Tibial artery (tissue), 4 donors: ENCODE measurements at regions of chr4 and their contacts with region 1.

Region 1: GRCh38 chr4:102826890-102827673 is at the start of gene UBE2D3:
- DNase-seq: peak; percentile 92 to 96
- H3K4me3 ChIP-seq: peak within 1 kb of the TSS; percentile 75 to 76
- H3K27ac ChIP-seq: peak within 1 kb of the TSS; percentile 99 to 100
- H3K4me1 ChIP-seq: peaks cover 0 to 31% (median 13%) of the 10 kb centered on the region in 4 donors
- H3K27me3 ChIP-seq: no peaks in the 10 kb centered on the region
- CTCF ChIP-seq: no peak

Region 2: GRCh38 chr4:102760645-102761295 is 66.3 kb before region 1 on chr4 and contains the start of gene MANBA:
- intact Hi-C with region 1: loop called (anchors 10 kb)
- DNase-seq: peak; percentile 80 to 92
- H3K4me3 ChIP-seq: peak within 1 kb of the TSS; percentile 90 to 91
- H3K27ac ChIP-seq: peak within 1 kb of the TSS; percentile 78
- H3K4me1 ChIP-seq: peaks cover 0 to 18% (median 8%) of the 10 kb centered on the region in 4 donors
- H3K27me3 ChIP-seq: no peaks in the 10 kb centered on the region
- CTCF ChIP-seq: no peak

Region 3: GRCh38 chr4:103019308-103020124 is 192.4 kb after region 1 on chr4 and contains the start of gene SLC9B1:
- intact Hi-C with region 1: loop called (anchors 5 kb)
- DNase-seq: peak; percentile 97 to 98
- H3K4me3 ChIP-seq: peak within 1 kb of the TSS; percentile 54 to 55
- H3K27ac ChIP-seq: peak within 1 kb of the TSS; percentile 86 to 92
- H3K4me1 ChIP-seq: peaks cover 0 to 7% (median 3%) of the 10 kb centered on the region in 4 donors
- H3K27me3 ChIP-seq: no peaks in the 10 kb centered on the region
- CTCF ChIP-seq: no peak

Region 4: GRCh38 chr4:103060453-103061148 is 233.5 kb after region 1 on chr4:
- intact Hi-C with region 1: no loop called
- DNase-seq: no peak
- H3K4me3 ChIP-seq: no peak overlapping the region
- H3K27ac ChIP-seq: no peak overlapping the region
- H3K4me1 ChIP-seq: no peaks in the 10 kb centered on the region
- H3K27me3 ChIP-seq: no peaks in the 10 kb centered on the region
- CTCF ChIP-seq: no peak